ENCODE measurements at regions of chr5 and their contacts with region 1.

Region 1: DNA sequence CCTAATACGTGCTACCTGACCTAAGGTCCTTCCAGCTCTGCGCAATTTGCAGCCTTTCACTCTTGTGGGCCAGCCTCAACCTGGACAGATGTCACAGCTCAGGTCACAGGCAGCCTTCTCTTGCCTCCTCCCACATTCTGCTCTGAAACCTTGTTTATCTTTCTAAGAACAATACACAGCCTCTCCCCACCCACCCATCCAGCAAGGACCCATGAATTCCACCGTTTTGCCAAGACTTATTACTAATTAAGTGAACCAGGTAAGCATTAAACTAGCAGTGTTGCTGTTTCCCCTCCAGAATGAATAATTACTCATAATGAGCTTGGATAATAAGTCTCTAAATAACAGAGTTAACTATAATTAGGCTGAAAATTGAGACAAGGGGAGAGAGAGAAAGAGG is 11.0 kb downstream of the FABP6 start:
- DNase-seq: no peak
- H3K4me3 ChIP-seq: no peak overlapping the region
- H3K27ac ChIP-seq: no peak overlapping the region
- H3K4me1 ChIP-seq: no peaks in the 10 kb centered on the region
- H3K27me3 ChIP-seq: no peaks in the 10 kb centered on the region
- CTCF ChIP-seq: no peak

Region 2: DNA sequence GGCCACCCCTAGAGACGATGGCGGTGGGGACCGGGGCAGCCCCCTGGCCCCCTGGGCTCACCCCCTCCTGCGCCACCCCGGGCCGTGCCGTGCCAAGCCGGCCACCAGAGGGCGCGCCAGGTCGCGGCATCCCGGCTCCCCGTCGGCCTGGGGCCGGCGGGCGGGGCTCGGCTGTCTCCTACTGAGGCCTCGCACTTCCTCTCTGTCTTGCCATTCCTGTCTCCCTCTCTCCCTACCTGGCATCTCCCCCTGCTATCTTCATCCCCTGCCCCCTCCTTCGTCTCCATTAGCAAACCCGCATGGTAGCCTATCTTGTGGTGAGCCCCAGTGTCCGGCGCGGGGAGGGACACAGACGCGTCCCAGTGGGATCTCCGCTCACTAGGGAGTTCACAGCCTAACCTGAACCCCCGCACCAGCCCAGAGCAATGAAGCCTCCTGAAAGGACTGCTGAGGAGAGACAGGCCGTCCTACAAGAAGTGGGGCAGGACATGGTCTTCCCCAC is 40.9 kb before region 1 on chr5:
- CTCF ChIA-PET with region 1: no interaction called
- dilution Hi-C with region 1: no loop called
- in situ Hi-C with region 1: no loop called
- intact Hi-C with region 1: loop called (anchors 5 kb)
- DNase-seq: peak; percentile 39
- H3K4me3 ChIP-seq: peak overlapping the region in 2 of 3 experiments; percentile 12 to 38
- H3K27ac ChIP-seq: no peak overlapping the region
- H3K4me1 ChIP-seq: no peaks in the 10 kb centered on the region
- H3K27me3 ChIP-seq: no peaks in the 10 kb centered on the region
- CTCF ChIP-seq: peak; percentile 60 to 75

Region 3: GRCh38 chr5:160287378-160288051 is 47.2 kb after region 1 on chr5:
- CTCF ChIA-PET with region 1: no interaction called
- dilution Hi-C with region 1: no loop called
- in situ Hi-C with region 1: no loop called
- intact Hi-C with region 1: loop called (anchors 5 kb)
- DNase-seq: peak; percentile 65
- H3K4me3 ChIP-seq: no peak overlapping the region
- H3K27ac ChIP-seq: no peak overlapping the region
- H3K4me1 ChIP-seq: peaks cover 55% of the 10 kb centered on the region
- H3K27me3 ChIP-seq: no peaks in the 10 kb centered on the region
- CTCF ChIP-seq: no peak

Region 4: GRCh38 chr5:160315968-160316367 is 75.6 kb after region 1 on chr5:
- CTCF ChIA-PET with region 1: no interaction called
- dilution Hi-C with region 1: no loop called
- in situ Hi-C with region 1: no loop called
- intact Hi-C with region 1: no loop called
- DNase-seq: peak; percentile 93
- H3K4me3 ChIP-seq: no peak overlapping the region
- H3K27ac ChIP-seq: peak overlapping the region; percentile 75
- H3K4me1 ChIP-seq: peaks cover 22% of the 10 kb centered on the region
- H3K27me3 ChIP-seq: no peaks in the 10 kb centered on the region
- CTCF ChIP-seq: no peak

Region 5: DNA sequence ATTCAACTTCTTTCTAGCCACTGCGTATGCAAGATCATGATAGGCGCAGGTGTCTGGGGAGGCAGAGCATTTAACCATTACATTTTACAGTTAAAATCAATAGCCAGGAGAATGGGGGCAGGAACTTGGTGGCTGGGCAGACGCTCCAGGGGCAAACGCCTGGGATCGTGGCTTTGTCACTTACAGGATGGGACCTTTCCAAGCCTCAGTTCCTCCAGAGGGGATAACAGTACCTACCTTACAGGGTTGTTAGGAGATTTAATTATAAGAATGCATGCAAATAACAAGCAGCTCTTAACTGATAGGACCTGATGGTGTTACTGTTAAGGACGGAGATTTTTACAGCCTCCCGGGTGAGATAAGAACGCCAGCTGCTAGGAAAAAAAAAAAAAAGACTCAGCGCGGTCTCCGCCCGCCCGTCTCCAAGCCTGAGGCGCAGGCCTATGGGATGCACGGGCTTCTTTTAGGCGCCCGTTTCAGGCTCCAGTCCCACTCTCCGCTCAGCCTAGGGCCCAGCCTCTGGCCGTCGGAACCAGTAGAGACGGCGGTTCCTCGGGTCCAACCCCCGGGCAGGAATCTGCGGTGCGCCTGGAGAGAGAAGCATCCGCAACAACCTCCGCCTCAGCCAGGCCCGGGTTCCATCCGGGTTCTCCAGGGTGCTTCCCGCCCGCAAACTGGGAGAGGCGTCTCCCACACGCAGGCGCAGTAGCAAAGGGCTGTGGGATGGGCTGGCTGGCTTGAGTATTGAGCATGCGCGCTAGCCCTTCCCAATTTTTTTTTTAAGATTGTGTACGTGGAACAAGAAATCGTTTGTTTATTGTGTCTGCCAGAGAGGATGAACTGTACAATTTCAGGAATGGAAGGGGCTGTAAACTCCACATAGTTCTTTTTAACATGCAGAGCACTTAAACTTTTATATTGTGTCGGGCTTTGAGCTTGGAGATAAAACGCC is 159.3 kb after region 1 on chr5 and contains the start of gene FAM200C:
- CTCF ChIA-PET with region 1: interaction called, 11 read pairs
- dilution Hi-C with region 1: no loop called
- in situ Hi-C with region 1: no loop called
- intact Hi-C with region 1: no loop called
- DNase-seq: peak; percentile 89
- H3K4me3 ChIP-seq: peak within 1 kb of the TSS; percentile 71 to 77 (median 73)
- H3K27ac ChIP-seq: peak within 1 kb of the TSS; percentile 81
- H3K4me1 ChIP-seq: peaks cover 9% of the 10 kb centered on the region
- H3K27me3 ChIP-seq: no peaks in the 10 kb centered on the region
- CTCF ChIP-seq: no peak
- total RNA-seq, gene FAM200C: 1.6 to 2.8 TPM